Activated T-helper 2 cell treated with anti-CD3 and anti-CD28 coated beads, Interferon-gamma antibody, Interleukin-2, Interleukin-4, amounts not matched to agents 10 μg/mL and 5 μg/mL and 100 μg/mL, durations not matched to agents 14 hours and 24 hours and 36 hours (primary cell): ENCODE measurements at regions of chr15 and their contacts with region 1.

Region 1: GRCh38 chr15:75042730-75043508 is 19.5 kb downstream of the PPCDC start:
- DNase-seq: peak; percentile 81
- H3K4me3 Mint-ChIP-seq: peak overlapping the region; percentile 74
- H3K27ac Mint-ChIP-seq: peak overlapping the region; percentile 73
- H3K4me1 Mint-ChIP-seq: peaks cover 87% of the 10 kb centered on the region
- H3K27me3 Mint-ChIP-seq: no peaks in the 10 kb centered on the region

Region 2: GRCh38 chr15:75029378-75030022 is 13.4 kb before region 1 on chr15:
- intact Hi-C with region 1: loop called (anchors 1 kb)
- DNase-seq: peak; percentile 79
- H3K4me3 Mint-ChIP-seq: no peak overlapping the region
- H3K27ac Mint-ChIP-seq: peak overlapping the region; percentile 48
- H3K4me1 Mint-ChIP-seq: peaks cover 41% of the 10 kb centered on the region
- H3K27me3 Mint-ChIP-seq: no peaks in the 10 kb centered on the region

Region 3: GRCh38 chr15:75104804-75105535 is 62.1 kb after region 1 on chr15:
- intact Hi-C with region 1: loop called (anchors 1 kb)
- DNase-seq: peak; percentile 59
- H3K4me3 Mint-ChIP-seq: no peak overlapping the region
- H3K27ac Mint-ChIP-seq: peak overlapping the region; percentile 84
- H3K4me1 Mint-ChIP-seq: peaks cover 43% of the 10 kb centered on the region
- H3K27me3 Mint-ChIP-seq: no peaks in the 10 kb centered on the region

Region 4: DNA sequence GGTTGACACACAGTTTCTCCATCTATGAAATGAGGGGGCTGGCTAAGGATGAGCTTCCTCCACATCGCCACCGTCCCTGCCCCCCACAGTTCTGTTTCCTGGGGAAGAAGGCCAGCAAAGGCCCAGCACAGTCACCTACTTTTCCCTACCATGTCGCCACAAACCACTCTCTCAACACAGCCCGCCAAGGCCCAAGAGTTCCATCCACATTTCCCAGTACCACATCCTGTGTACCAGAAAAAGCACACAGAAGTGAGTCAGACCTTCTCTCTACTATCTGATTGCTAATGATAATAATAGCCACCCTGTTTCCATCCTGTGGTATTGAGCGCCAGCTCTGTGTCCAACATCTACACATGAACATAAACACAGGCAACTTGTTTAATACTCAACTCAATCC is 128.5 kb after region 1 on chr15:
- intact Hi-C with region 1: loop called (anchors 1 kb)
- DNase-seq: peak; percentile 55
- H3K4me3 Mint-ChIP-seq: peak overlapping the region; percentile 1
- H3K27ac Mint-ChIP-seq: peak overlapping the region; percentile 72
- H3K4me1 Mint-ChIP-seq: peaks cover 60% of the 10 kb centered on the region
- H3K27me3 Mint-ChIP-seq: no peaks in the 10 kb centered on the region